ENCODE measurements at regions of chr17 and their contacts with region 1.

Region 1: GRCh38 chr17:39153599-39154051 is 2.2 kb upstream of the PLXDC1 start:
- DNase-seq: peak; percentile 85
- H3K4me3 ChIP-seq: peak overlapping the region; percentile 87
- H3K27ac ChIP-seq: peak overlapping the region; percentile 74
- H3K4me1 ChIP-seq: no peaks in the 10 kb centered on the region
- H3K27me3 ChIP-seq: no peaks in the 10 kb centered on the region
- CTCF ChIP-seq: no peak

Region 2: DNA sequence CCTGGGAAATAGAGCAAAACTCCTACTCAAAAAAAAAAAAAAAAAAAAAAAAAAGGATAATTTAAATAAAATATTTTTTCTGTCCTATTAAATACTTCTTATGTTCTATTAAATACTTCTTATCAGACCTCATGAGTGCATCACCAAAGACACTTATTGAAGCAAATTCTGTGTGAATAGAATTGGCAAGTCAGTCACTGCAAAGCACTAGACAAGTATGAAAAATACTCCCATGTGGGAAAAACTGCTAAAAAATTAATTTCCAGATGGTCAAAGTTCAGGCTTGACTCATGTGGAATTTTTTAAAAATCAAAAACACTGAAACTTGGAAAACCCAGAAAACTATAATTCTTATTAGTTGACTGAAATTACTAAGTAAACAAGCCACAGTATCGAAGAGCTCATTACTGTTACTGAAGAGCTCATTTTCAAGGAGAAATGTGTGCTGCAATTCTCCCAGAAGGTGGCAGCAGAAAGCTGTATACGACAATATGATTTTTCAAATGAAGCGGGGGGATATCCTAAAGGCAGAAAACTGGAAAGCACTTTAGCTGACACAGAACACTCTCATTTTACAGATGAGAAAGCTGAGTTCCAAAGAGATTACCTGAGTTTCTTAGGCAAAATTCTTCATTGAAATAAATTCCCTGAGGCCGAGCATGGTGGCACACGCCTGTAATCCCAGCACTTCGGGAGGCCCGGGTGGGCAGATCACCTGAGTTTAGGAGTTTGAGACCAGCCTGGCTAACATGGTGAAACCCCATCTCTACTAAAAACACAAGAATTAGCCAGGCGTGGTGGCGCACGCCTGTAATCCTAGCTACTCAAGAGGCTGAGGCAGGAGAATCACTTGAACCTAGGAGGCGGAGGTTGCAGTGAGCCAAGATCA is 170.5 kb before region 1 on chr17:
- CTCF ChIA-PET with region 1: interaction called, 35 read pairs
- POLR2A ChIA-PET with region 1: no interaction called
- intact Hi-C with region 1: loop called (anchors 1 kb)
- DNase-seq: peak; percentile 71
- H3K4me3 ChIP-seq: no peak overlapping the region
- H3K27ac ChIP-seq: no peak overlapping the region
- H3K4me1 ChIP-seq: no peaks in the 10 kb centered on the region
- H3K27me3 ChIP-seq: no peaks in the 10 kb centered on the region
- CTCF ChIP-seq: peak; percentile 67

Region 3: GRCh38 chr17:39099663-39100286 is 53.9 kb before region 1 on chr17:
- CTCF ChIA-PET with region 1: no interaction called
- POLR2A ChIA-PET with region 1: no interaction called
- intact Hi-C with region 1: no loop called
- DNase-seq: peak; percentile 54
- H3K4me3 ChIP-seq: no peak overlapping the region
- H3K27ac ChIP-seq: peak overlapping the region; percentile 79
- H3K4me1 ChIP-seq: peaks cover 13% of the 10 kb centered on the region
- H3K27me3 ChIP-seq: no peaks in the 10 kb centered on the region
- CTCF ChIP-seq: no peak

Region 4: GRCh38 chr17:39164675-39165143 is 11.1 kb after region 1 on chr17:
- CTCF ChIA-PET with region 1: interaction called, 16 read pairs
- POLR2A ChIA-PET with region 1: no interaction called
- intact Hi-C with region 1: no loop called
- DNase-seq: peak; percentile 82
- H3K4me3 ChIP-seq: peak overlapping the region; percentile 47
- H3K27ac ChIP-seq: no peak overlapping the region
- H3K4me1 ChIP-seq: no peaks in the 10 kb centered on the region
- H3K27me3 ChIP-seq: no peaks in the 10 kb centered on the region
- CTCF ChIP-seq: peak; percentile 71

Measured in A673 (cell line).